Dorsolateral prefrontal cortex (tissue), 120 donors: ENCODE measurements at regions of chr10 and their contacts with region 1.

Region 1: DNA sequence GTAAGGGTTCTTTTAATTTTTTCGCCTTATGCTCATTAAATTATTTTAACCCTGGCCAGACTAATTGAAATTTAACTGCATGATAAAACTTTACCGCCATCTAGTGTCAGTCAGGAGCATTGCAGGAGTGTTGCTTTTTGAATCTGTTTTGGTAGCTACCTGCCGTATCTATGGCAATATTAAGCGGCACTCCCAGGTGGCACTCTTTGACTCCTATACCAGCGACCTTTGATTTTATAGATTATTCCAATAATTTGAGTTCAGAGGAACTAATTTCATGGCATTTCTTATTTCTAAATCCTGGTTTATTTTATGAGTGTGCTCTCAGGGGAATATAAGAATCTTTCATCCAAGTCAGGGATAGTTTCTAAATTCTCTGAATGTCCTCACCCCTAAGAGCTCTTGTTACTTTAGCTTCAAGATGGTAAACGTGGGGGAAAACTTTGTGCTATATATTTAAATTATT is 198.9 kb downstream of the REEP3 start:
- DNase-seq: peak in 2 of 10 donors; percentile 46 to 53
- H3K4me3 ChIP-seq: peak overlapping the region in 7 of 59 donors; percentile 3 to 50 (median 17)
- H3K27ac ChIP-seq: peak overlapping the region in 4 of 59 donors; percentile 0 to 57 (median 48)
- H3K27me3 ChIP-seq: no peaks in the 10 kb centered on the region
- CTCF ChIP-seq: peak; percentile 91 to 100 (median 98)

Region 2: DNA sequence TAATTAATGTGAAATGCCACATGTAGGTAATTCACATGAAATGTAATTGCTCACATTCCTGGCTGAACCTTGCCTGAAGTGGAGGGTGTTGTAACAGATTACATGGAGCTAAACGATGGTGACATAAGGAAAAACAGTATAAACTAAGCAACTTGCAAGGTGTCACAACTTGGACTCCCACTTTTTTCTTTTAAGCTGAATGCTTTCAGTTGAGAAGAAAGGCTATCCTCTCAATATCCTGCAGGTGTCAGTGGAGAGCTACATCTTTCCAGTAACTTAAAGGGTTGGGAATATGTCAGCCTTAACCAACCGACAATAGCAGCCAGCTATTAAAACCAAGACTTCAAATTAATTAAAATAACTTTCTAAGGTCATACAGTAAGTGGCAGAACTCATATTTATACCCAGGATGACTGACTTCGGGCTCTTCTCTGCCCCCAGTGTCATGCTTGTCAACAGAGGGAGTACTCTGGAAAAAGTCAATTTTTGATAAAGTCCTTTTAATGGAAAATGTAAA is 553.3 kb before region 1 on chr10:
- intact Hi-C with region 1: loop called (anchors 5 kb)
- DNase-seq: peak in 1 of 10 donors; percentile 16
- H3K4me3 ChIP-seq: no peak overlapping the region
- H3K27ac ChIP-seq: peak overlapping the region in 1 of 59 donors; percentile 15
- H3K27me3 ChIP-seq: no peaks in the 10 kb centered on the region
- CTCF ChIP-seq: peak; percentile 66 to 98 (median 86)

Region 3: GRCh38 chr10:63217120-63217605 is 502.9 kb before region 1 on chr10:
- intact Hi-C with region 1: loop called in 1 of 2 experiments (anchors 5 kb)
- DNase-seq: no peak
- H3K4me3 ChIP-seq: no peak overlapping the region
- H3K27ac ChIP-seq: peak overlapping the region in 2 of 59 donors; percentile 1 to 15
- H3K27me3 ChIP-seq: no peaks in the 10 kb centered on the region
- CTCF ChIP-seq: peak; percentile 52 to 93 (median 80)